CD8-positive, alpha-beta T cell (primary cell): ENCODE measurements at regions of chr19 and their contacts with region 1.

Region 1: GRCh38 chr19:47112997-47113849 is at the start of gene ZC3H4:
- DNase-seq: peak; percentile 98 to 100 (median 99)
- ATAC-seq: peak; percentile 82
- H3K4me3 ChIP-seq: peak within 1 kb of the TSS; percentile 83 to 94
- H3K4me3 Mint-ChIP-seq: peak within 1 kb of the TSS; percentile 96
- H3K27ac ChIP-seq: peak within 1 kb of the TSS; percentile 99
- H3K27ac Mint-ChIP-seq: peak within 1 kb of the TSS; percentile 99
- H3K4me1 ChIP-seq: peaks cover 29% of the 10 kb centered on the region
- H3K4me1 Mint-ChIP-seq: peaks cover 32% of the 10 kb centered on the region
- H3K27me3 ChIP-seq: no peaks in the 10 kb centered on the region
- H3K27me3 Mint-ChIP-seq: no peaks in the 10 kb centered on the region
- CTCF ChIP-seq: no peak
- total RNA-seq, gene ZC3H4: 30.0 to 33.0 TPM

Region 2: GRCh38 chr19:45584332-45585157 is 1528.7 kb before region 1 on chr19 and contains the start of gene OPA3:
- CTCF ChIA-PET with region 1: no interaction called
- POLR2A ChIA-PET with region 1: no interaction called
- intact Hi-C with region 1: loop called (anchors 2 to 10 kb)
- DNase-seq: peak; percentile 97 to 100 (median 99)
- ATAC-seq: peak; percentile 86
- H3K4me3 ChIP-seq: peak within 1 kb of the TSS; percentile 80 to 86
- H3K4me3 Mint-ChIP-seq: peak within 1 kb of the TSS; percentile 96
- H3K27ac ChIP-seq: peak within 1 kb of the TSS; percentile 95 to 99
- H3K27ac Mint-ChIP-seq: peak within 1 kb of the TSS; percentile 99
- H3K4me1 ChIP-seq: peaks cover 6% of the 10 kb centered on the region
- H3K4me1 Mint-ChIP-seq: peaks cover 19% of the 10 kb centered on the region
- H3K27me3 ChIP-seq: no peaks in the 10 kb centered on the region
- H3K27me3 Mint-ChIP-seq: peaks cover 7% of the 10 kb centered on the region
- CTCF ChIP-seq: no peak
- total RNA-seq, gene OPA3: 5.6 to 5.7 TPM

Region 3: DNA sequence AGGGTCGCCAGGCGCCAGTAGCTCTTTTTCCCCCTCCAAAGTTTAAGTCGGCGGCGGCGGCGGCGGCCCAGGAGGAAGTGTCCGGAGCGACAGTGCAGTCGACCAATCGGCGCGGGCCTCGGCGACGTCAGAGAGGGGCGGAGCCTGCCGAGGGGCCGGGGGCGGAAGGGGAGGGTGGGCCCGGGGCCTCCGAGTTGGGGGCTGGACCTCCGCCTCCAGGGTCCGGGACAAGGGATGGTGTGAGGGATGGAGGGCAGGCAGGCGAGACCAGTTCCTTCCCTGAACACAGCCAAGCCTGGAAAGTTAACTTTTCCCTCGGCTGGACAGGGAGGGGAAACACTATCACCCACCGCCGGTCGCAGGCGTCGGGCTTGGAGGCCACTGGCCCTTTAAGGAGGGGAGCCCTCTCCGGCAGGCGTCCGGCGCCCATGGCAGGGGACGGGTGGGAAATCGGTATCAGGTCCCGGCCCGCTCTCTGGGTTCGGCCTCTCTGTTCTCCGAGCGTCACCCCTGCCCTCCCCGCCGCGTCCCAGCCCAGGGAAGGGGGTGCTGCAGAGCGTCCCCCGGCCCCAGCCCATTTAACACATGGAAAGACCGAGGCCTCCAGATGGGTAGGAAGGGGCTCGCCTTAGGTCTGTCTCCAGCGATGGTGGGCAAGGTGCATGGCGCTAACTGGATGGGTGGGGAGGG is 396.0 kb before region 1 on chr19 and contains the start of gene PRKD2:
- CTCF ChIA-PET with region 1: no interaction called
- POLR2A ChIA-PET with region 1: interaction called, 3 read pairs
- intact Hi-C with region 1: loop called in 1 of 2 experiments (anchors 5 kb)
- DNase-seq: peak; percentile 60 to 91 (median 86)
- ATAC-seq: peak; percentile 51
- H3K4me3 ChIP-seq: peak within 1 kb of the TSS; percentile 71 to 73
- H3K4me3 Mint-ChIP-seq: peak within 1 kb of the TSS; percentile 92
- H3K27ac ChIP-seq: peak within 1 kb of the TSS; percentile 77 to 94
- H3K27ac Mint-ChIP-seq: peak within 1 kb of the TSS; percentile 99
- H3K4me1 ChIP-seq: peaks cover 37% of the 10 kb centered on the region
- H3K4me1 Mint-ChIP-seq: peaks cover 45% of the 10 kb centered on the region
- H3K27me3 ChIP-seq: no peaks in the 10 kb centered on the region
- H3K27me3 Mint-ChIP-seq: no peaks in the 10 kb centered on the region
- CTCF ChIP-seq: no peak
- total RNA-seq, gene PRKD2: 81.1 to 89.7 TPM

Region 4: DNA sequence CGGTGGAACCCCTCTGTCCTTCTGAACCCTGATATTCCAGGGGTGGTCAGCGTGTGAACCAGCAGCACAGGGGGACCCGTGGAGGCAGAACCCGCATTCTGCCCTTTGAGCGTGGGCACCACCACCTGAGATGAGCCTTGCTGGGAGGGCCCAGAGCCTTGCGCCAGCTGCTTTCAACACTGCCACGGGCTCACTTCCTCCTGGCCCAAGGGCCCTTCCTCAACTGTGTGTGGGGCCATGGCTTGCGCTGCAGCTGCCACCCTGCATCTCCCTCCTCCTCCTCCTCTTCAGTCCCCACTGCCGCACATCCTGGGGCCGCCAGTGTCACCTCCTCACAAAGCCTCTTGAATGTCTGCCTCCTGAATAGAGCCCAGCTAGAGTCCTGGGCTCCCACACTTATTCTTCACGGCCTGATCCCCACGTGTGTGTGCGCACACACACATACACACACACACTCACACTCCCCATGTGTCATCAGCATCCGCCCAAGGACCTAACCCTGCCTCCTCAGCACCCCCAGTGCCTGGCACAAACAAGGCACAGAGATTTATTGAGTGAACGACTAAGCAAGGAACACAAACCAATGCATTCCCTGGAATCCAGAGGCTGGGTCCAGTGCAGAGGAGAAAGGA is 37.9 kb before region 1 on chr19:
- CTCF ChIA-PET with region 1: interaction called, 38 read pairs
- POLR2A ChIA-PET with region 1: interaction called, 9 read pairs
- intact Hi-C with region 1: loop called in 1 of 2 experiments (anchors 1 kb)
- DNase-seq: no peak
- ATAC-seq: no peak
- H3K4me3 ChIP-seq: no peak overlapping the region
- H3K4me3 Mint-ChIP-seq: no peak overlapping the region
- H3K27ac ChIP-seq: no peak overlapping the region
- H3K27ac Mint-ChIP-seq: no peak overlapping the region
- H3K4me1 ChIP-seq: no peaks in the 10 kb centered on the region
- H3K4me1 Mint-ChIP-seq: peaks cover 8% of the 10 kb centered on the region
- H3K27me3 ChIP-seq: no peaks in the 10 kb centered on the region
- H3K27me3 Mint-ChIP-seq: no peaks in the 10 kb centered on the region
- CTCF ChIP-seq: no peak

Region 5: DNA sequence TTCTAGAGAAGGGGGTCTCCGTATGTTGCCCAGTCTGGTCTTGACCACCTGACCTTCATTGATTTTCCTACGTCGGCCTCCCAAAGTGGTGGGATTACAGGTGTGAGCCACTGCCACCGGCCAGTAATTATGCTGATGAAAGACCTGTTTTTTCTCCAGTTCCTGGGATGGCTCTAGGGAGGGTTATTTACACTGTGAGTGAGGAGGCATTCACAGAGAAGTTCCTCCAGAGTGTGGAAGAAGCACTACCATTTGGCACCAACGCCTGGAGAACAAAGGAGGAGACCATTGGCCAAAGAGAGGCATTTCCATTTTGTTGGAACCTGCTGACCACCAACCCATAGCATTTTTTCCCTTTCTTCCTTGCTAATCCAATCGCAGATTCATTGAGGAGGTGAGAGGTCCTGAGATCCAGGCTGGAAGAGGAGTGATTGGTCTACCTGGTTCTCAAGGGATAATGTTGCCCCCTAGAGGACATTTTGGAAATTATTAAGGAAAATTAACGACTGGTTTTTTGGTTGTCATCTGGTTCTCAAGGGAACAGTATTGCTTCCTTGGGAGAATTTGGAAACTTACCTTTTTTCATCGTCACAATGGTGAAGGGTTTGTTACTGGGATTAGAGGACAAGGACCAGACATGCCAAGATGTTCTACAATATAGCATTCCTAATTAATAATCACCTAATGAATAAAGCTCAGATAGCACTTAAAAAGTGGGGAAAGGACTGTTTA is 11.9 kb after region 1 on chr19:
- CTCF ChIA-PET with region 1: interaction called, 16 read pairs
- POLR2A ChIA-PET with region 1: interaction called, 5 read pairs
- intact Hi-C with region 1: loop called (anchors 1 kb)
- DNase-seq: peak in 4 of 9 experiments; percentile 11 to 79 (median 64)
- ATAC-seq: peak; percentile 55
- H3K4me3 ChIP-seq: no peak overlapping the region
- H3K4me3 Mint-ChIP-seq: no peak overlapping the region
- H3K27ac ChIP-seq: no peak overlapping the region
- H3K27ac Mint-ChIP-seq: no peak overlapping the region
- H3K4me1 ChIP-seq: peaks cover 2% of the 10 kb centered on the region
- H3K4me1 Mint-ChIP-seq: peaks cover 5% of the 10 kb centered on the region
- H3K27me3 ChIP-seq: no peaks in the 10 kb centered on the region
- H3K27me3 Mint-ChIP-seq: no peaks in the 10 kb centered on the region
- CTCF ChIP-seq: peak; percentile 75

Region 6: DNA sequence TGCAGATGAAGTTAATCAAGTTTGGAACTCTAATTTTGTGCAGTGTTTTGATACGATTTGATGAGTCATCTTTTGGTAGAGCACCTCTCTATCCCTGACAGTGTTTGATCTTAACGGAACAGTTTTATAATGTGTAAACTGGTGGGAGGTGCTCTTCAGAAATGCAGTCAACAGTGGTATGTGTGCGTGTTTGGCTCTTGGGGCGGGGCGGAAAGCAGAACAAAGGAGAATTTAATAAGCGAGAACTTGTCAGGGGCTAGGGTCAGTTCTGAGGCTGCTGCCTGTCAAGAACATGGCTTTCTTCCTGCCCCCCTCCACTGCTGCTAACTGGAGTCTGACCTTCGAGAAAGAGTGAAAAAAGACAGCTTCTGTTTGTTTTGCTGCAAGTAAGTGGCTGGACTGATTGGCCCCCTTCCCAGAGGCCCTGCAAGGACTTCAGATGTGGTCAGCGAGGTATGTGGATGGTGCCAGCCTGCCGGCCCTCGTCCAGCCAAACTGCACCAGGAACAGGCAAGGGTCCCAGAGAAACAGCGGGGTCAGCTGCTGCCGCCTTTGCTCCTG is 77.0 kb after region 1 on chr19:
- CTCF ChIA-PET with region 1: no interaction called
- POLR2A ChIA-PET with region 1: interaction called, 6 read pairs
- intact Hi-C with region 1: loop called in 1 of 2 experiments (anchors 1 kb)
- DNase-seq: peak in 8 of 9 experiments; percentile 18 to 80 (median 59)
- ATAC-seq: peak; percentile 39
- H3K4me3 ChIP-seq: no peak overlapping the region
- H3K4me3 Mint-ChIP-seq: peak overlapping the region; percentile 38
- H3K27ac ChIP-seq: peak overlapping the region in 1 of 2 experiments; percentile 9
- H3K27ac Mint-ChIP-seq: peak overlapping the region; percentile 94
- H3K4me1 ChIP-seq: peaks cover 70% of the 10 kb centered on the region
- H3K4me1 Mint-ChIP-seq: peaks cover 65% of the 10 kb centered on the region
- H3K27me3 ChIP-seq: no peaks in the 10 kb centered on the region
- H3K27me3 Mint-ChIP-seq: no peaks in the 10 kb centered on the region
- CTCF ChIP-seq: no peak

Region 7: GRCh38 chr19:47745010-47745901 is 632.0 kb after region 1 on chr19 and contains the start of gene NOP53:
- CTCF ChIA-PET with region 1: no interaction called
- POLR2A ChIA-PET with region 1: no interaction called
- intact Hi-C with region 1: loop called in 1 of 2 experiments (anchors 10 kb)
- DNase-seq: peak; percentile 91 to 99 (median 97)
- ATAC-seq: peak; percentile 82
- H3K4me3 ChIP-seq: peak within 1 kb of the TSS; percentile 64 to 78
- H3K4me3 Mint-ChIP-seq: peak within 1 kb of the TSS; percentile 99
- H3K27ac ChIP-seq: peak within 1 kb of the TSS; percentile 85 to 96
- H3K27ac Mint-ChIP-seq: peak within 1 kb of the TSS; percentile 100
- H3K4me1 ChIP-seq: peaks cover 60% of the 10 kb centered on the region
- H3K4me1 Mint-ChIP-seq: peaks cover 39% of the 10 kb centered on the region
- H3K27me3 ChIP-seq: no peaks in the 10 kb centered on the region
- H3K27me3 Mint-ChIP-seq: no peaks in the 10 kb centered on the region
- CTCF ChIP-seq: no peak
- total RNA-seq, gene NOP53: 924 to 926 TPM